Ascending aorta (tissue), 2 donors: ENCODE measurements at regions of chr13 and their contacts with region 1.

Region 1: DNA sequence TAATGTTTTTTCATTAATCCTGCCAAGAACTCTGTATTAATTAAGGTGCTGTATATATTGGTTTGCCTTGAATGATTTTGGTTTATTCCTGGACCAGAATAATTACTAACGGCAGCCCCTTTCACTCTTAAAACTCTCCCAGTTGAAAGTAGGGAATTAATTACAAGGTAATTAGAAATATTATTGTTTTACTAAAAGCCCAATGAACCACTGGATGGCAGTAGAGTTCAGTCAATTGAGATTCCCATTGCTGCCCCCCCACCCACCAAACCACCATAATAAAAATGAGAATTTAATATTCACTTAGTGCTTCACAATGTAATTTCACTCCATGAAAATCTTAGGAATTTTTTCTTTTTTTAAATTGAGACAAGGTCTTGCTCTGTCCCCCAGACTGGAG is 13.7 kb downstream of the WBP4 start:
- DNase-seq: no peak
- H3K4me3 ChIP-seq: no peak overlapping the region
- H3K27ac ChIP-seq: no peak overlapping the region
- H3K4me1 ChIP-seq: no peaks in the 10 kb centered on the region
- H3K27me3 ChIP-seq: no peaks in the 10 kb centered on the region
- CTCF ChIP-seq: peak; percentile 23 to 58 (median 29)

Region 2: GRCh38 chr13:40789275-40790133 is 285.5 kb before region 1 on chr13 and contains the start of gene SLC25A15:
- intact Hi-C with region 1: loop called (anchors 5 kb)
- DNase-seq: peak in 1 of 2 donors; percentile 89
- H3K4me3 ChIP-seq: peak within 1 kb of the TSS; percentile 76 to 79
- H3K27ac ChIP-seq: peak within 1 kb of the TSS; percentile 71 to 83
- H3K4me1 ChIP-seq: no peaks in the 10 kb centered on the region
- H3K27me3 ChIP-seq: no peaks in the 10 kb centered on the region
- CTCF ChIP-seq: no peak
- total RNA-seq, gene SLC25A15: 5.5 TPM

Region 3: DNA sequence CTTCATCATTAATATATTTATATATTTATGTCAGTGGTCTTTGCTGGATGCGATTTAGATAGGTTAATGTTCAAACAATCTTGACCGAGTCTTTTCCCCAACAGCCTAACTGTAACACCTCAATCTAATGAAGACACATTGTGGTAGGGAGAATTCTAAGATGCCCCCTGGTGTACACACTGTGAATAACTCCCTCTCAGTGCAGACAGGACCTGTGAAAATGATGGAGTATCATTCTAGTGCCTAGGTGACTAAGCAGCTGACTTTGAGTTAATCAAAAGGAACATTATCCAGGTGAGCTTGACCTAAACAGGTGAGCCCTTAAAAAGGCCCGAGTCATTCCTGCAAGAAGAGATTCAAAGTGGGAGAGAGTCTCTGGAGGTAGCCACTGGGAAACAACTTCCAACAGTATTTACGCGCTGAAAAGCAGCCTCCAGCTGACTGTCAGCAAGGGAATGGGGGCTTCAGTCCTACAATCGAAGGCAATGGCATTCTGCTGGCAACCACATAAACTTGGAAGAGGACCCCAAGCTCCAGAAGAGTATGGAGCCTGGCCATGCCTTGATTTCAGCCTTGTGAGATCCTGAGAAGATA is 147.3 kb after region 1 on chr13:
- intact Hi-C with region 1: loop called (anchors 2 kb)
- DNase-seq: peak in 1 of 2 donors; percentile 68
- H3K4me3 ChIP-seq: no peak overlapping the region
- H3K27ac ChIP-seq: no peak overlapping the region
- H3K4me1 ChIP-seq: no peaks in the 10 kb centered on the region
- H3K27me3 ChIP-seq: no peaks in the 10 kb centered on the region
- CTCF ChIP-seq: peak; percentile 52 to 80 (median 70)

Region 4: DNA sequence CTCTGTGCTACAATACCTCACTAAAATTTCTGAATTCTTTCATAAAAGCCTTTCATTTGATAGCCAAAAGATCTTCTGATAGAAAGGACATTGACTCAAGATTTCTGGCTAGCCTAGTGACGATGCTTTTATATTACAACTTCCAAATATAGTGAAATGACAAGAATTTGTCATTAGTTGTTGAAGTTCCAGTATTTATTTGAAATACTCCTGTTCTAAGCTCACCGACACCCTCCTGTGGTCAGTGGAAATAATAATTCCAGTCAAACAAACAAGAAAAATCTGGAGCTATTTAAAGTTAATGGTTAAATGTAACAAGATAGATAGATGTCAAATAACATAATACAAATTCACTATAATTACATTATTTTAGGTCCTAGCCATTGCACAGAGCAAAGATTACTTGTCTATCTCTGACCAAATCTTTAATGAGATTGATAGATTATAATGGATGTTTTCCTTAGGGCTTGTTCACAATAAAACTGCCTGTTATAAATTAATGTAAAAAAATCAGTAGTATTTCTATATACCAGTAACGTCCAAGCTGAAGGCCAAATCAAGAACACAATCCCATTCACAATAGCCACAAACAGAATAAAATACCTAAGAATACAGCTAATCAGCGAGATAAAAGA is 577.8 kb after region 1 on chr13:
- intact Hi-C with region 1: no loop called
- DNase-seq: no peak
- H3K4me3 ChIP-seq: no peak overlapping the region
- H3K27ac ChIP-seq: peak overlapping the region in 1 of 2 donors; percentile 40
- H3K4me1 ChIP-seq: peaks cover 0 to 14% of the 10 kb centered on the region in 2 donors
- H3K27me3 ChIP-seq: no peaks in the 10 kb centered on the region
- CTCF ChIP-seq: peak; percentile 49 to 70 (median 64)